ENCODE measurements at regions of chr6 and their contacts with region 1.

Region 1: GRCh38 chr6:170271771-170272314 is 19.0 kb downstream of the DLL1 start:
- DNase-seq: peak; percentile 56 to 92 (median 80)
- ATAC-seq: peak; percentile 91
- H3K4me3 Mint-ChIP-seq: peak overlapping the region; percentile 82 to 94 (median 90)
- H3K27ac Mint-ChIP-seq: peak overlapping the region; percentile 89 to 98 (median 96)
- H3K4me1 Mint-ChIP-seq: peaks cover 17 to 41% (median 27%) of the 10 kb centered on the region in 4 donors
- H3K27me3 Mint-ChIP-seq: no peaks in the 10 kb centered on the region

Region 2: DNA sequence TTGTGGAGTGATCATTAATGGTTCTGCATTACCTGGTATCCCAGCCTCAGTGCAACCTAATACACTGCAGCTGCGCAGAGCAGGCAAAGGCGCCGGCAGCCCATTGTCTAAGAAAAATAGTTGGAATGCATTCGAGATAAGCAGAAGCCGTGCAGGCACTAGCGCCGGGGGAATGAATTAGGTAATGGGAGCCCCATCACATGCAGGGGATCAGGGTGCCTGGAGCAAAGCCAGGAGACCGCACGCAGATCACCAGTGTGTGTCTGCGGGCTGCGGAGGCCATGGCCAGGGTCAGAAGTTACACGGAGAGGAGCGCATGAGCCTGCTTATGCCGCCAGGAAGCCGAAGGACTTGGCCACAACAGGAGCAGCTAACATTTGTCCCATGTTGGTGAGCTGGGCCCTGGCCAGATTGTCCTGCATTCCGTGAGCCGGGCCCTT is 137.8 kb before region 1 on chr6:
- POLR2A ChIA-PET with region 1: no interaction called
- DNase-seq: peak in 1 of 10 donors; percentile 44
- ATAC-seq: no peak
- H3K4me3 Mint-ChIP-seq: no peak overlapping the region
- H3K27ac Mint-ChIP-seq: no peak overlapping the region
- H3K4me1 Mint-ChIP-seq: peaks cover 0 to 6% (median 2%) of the 10 kb centered on the region in 4 donors
- H3K27me3 Mint-ChIP-seq: peaks cover 0 to 21% (median 0%) of the 10 kb centered on the region in 5 donors

Region 3: DNA sequence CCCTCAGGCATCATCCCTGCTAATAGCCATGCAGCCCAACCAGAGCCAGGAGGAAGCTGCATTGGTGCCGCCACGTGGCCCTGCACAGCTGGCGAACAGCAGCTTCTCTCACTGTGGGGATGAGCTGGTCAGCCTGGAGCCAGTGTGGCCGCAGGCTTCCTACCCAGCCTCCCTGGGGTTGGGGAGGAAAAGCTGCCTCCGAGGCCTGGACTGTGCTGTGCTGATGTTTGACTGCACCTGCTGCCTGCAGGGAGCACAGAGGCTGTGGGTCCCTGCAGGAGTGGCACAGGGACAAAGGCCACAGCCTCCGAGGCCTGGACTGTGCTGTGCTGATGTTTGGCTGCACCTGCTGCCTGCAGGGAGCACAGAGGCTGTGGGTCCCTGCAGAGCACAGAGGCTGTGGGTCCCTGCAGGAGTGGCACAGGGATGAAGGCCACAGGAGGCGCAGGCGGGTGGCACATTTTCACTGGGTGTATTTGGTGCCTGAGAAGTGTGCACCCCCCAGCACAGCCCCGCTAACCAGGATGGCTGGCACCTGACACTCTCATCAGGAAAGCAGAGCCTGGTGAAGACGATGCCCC is 64.9 kb before region 1 on chr6:
- POLR2A ChIA-PET with region 1: no interaction called
- DNase-seq: peak in 2 of 10 donors; percentile 14 to 54
- ATAC-seq: no peak
- H3K4me3 Mint-ChIP-seq: no peak overlapping the region
- H3K27ac Mint-ChIP-seq: no peak overlapping the region
- H3K4me1 Mint-ChIP-seq: peaks cover 3 to 9% (median 7%) of the 10 kb centered on the region in 4 donors
- H3K27me3 Mint-ChIP-seq: peaks cover 0 to 13% (median 6%) of the 10 kb centered on the region in 5 donors

Region 4: DNA sequence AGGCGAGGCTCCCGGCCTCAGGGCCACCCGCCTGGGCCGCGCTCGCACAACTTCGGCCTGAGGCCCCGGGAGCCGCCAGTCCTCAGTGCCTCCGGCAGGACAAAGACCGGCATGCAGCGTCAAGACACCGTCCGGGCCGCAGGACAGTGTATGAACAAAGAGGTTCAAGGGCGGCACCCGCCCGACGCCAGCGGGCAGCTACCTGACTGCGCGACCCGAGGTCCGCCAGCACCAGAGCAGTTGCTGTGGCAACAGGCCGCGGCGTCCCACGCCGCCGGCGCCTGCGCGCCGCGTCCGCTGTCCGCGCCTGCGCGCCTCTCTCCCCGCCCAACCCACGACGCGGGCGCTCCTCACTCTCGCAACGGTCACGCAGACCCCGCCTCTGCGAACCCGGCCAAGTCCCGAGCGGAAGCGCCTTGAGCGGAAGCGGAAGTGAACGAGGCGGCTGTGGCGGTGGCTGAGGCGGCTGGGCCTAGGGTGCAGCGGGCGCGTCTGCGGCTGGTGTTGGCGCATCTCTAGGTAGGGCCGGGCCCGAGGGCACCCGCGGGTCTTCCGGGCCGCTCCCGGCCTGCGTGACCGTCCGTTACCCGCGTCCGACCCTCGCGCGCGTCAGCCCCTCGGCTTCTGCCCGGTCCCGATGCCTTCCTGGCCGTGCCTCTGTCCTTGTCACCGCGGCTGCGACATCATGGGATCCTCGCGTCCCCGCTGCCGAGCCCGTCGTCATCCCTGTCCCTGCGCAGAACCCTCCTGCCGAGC is 34.7 kb after region 1 on chr6 and contains the start of gene FAM120B:
- POLR2A ChIA-PET with region 1: interaction called, 25 read pairs
- DNase-seq: peak; percentile 90 to 97 (median 94)
- ATAC-seq: peak; percentile 94 to 96
- H3K4me3 Mint-ChIP-seq: peak within 1 kb of the TSS; percentile 89 to 99 (median 96)
- H3K27ac Mint-ChIP-seq: peak within 1 kb of the TSS; percentile 93 to 99 (median 98)
- H3K4me1 Mint-ChIP-seq: peaks cover 33 to 52% (median 42%) of the 10 kb centered on the region in 4 donors
- H3K27me3 Mint-ChIP-seq: peaks cover 0 to 16% (median 5%) of the 10 kb centered on the region in 5 donors
- polyA plus RNA-seq, gene FAM120B: 16.4 to 34.7 (median 29.6) TPM

Measured in naive thymus-derived CD8-positive, alpha-beta T cell (primary cell).